Sciatic nerve (tissue), 2 donors: ENCODE measurements at regions of chr11 and their contacts with region 1.

Region 1: GRCh38 chr11:72179804-72180396 is 12.0 kb upstream of the FOLR1 start:
- DNase-seq: no peak
- ATAC-seq: no peak

Region 2: DNA sequence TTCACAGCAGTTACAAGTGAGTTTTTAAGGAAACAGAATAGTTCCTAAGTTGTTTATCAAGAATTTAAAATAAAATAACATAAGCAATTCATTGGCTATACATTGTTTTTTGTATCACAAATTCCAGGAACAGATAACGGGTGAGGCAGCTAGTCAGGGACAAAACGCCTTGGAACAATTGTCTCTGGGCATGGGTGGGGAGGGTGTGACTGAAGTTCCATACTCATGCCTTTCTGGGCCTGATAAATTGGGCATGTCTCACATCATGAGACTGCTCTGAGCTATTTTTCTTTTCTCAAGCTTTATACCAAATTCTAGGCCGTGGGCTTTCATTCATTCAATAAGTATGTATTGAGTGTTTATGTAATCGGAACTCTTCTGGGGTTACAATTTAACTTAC is 22.8 kb before region 1 on chr11:
- intact Hi-C with region 1: loop called (anchors 1 kb)
- DNase-seq: no peak
- ATAC-seq: no peak

Region 3: DNA sequence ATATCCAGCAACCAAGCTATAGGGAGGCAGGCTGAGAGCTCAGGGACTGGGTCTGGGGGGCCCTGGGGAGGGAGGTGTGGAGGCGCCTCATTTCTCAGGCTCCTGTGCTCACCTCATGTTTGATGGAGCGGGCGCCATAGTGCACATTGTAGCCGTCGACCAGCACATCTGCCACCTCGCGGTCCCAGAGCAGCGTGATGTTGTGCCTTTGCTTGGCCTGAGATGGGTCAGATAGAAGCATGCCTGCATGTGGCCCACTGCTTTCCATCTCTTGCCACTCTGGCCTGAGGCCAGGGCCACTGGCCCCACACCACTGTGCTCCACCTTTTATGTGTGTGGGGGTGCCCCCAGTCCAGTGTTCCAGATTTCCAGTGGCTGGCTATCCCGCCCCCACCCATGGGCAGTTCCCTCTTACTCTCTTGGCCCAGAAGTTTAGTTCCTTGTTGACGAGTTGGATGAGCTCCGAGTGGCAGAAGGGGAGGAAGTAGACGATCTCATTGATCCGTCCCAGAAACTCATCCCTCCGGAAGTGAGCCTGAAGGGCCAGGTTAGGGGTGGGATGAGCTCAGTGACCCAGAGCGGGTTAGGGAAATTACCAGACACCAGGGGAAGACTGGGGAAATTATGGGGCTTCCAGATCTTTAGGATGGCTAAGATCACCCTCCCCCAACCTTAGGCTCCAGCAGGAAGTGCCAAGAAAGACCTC is 114.2 kb after region 1 on chr11:
- intact Hi-C with region 1: no loop called
- DNase-seq: no peak
- ATAC-seq: peak; percentile 42